Left lung (tissue), 14 donors: ENCODE measurements at regions of chr11 and their contacts with region 1.

Region 1: DNA sequence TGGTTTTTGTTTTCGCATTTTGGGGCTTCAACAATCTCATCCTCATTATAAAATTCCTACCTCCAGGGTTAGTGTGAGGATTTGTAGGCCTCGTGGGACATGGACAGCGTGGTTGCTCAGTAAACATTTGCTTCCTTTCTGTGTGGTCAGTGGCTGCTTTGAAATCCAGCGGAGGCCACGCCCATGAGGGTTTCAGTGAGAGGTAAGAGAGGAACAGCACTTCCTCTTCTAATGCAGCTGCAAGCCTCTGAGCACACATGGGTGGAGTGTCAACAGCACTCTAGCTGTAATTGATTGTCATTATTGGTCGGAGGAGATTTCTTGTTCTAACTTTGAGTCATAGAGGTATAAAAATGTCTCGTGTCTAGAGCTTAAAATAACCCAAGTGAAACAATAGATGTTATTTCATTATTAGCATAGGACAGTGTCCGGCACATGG is 6.0 kb upstream of the ARHGAP42 start:
- DNase-seq: peak in 2 of 4 donors; percentile 66 to 79
- ATAC-seq: peak; percentile 88
- H3K4me3 ChIP-seq: no peak overlapping the region
- H3K27ac ChIP-seq: no peak overlapping the region
- H3K4me1 ChIP-seq: peaks cover 0 to 3% of the 10 kb centered on the region in 2 donors
- H3K27me3 ChIP-seq: peaks cover 0 to 7% of the 10 kb centered on the region in 2 donors
- CTCF ChIP-seq: no peak

Region 2: DNA sequence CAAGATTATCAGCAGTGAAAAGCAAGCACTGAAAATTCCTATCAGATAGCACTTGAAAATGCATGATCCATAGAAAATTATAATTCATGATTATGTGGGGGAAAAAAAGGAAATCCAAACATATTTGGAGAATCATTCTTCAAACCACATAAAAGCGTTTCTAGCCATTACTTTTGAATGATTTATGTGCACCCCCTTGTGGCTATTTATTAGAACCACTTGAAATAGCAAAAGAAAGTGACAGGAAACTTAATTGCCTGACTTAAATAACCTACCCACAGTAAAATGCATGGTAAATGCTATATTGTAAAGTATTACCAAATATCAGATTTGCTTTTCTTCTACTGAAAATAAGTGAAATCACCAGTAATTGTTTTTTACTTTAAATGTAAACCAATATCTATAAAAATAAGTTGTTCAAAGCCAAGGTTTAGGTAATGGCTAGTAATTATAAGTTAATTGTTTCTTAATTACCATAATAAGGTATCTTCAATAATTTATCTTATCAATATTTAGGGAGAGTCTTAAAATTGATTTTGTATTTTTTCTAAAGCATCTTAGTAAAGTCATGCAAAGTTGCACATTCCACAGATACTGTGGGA is 174.5 kb after region 1 on chr11:
- intact Hi-C with region 1: loop called in 1 of 2 experiments (anchors 5 kb)
- DNase-seq: peak in 2 of 4 donors; percentile 41 to 53
- ATAC-seq: peak; percentile 50
- H3K4me3 ChIP-seq: no peak overlapping the region
- H3K27ac ChIP-seq: no peak overlapping the region
- H3K4me1 ChIP-seq: no peaks in the 10 kb centered on the region
- H3K27me3 ChIP-seq: no peaks in the 10 kb centered on the region
- CTCF ChIP-seq: peak; percentile 30 to 55

Region 3: DNA sequence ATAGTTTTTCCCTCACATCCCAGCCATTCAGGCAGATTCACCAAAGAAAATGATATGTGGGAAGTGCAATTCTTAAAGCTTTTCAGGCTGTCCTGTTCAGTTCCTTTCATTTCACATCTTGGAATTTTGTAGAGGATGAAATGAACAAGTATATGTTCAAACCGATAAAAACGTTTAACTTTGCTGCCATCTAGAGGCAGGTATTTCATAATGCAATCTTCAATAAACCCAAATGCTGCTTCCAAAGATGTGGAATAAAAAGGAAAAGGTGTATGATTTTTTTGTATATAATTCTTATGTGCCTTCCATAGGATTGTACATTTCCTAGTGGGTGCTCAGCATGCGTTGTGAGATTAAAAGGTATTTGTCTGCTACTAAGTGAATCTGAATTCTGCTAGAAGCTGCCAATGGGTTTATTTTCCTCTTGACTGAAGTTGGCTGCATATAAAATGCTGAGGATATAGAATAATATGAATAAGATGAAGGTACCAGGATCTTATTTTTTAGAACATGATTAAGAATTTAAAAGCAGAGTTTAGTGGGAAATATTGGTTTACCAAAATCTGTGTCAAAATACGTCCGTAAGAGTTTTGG is 249.2 kb after region 1 on chr11:
- intact Hi-C with region 1: loop called in 1 of 2 experiments (anchors 5 kb)
- DNase-seq: peak in 2 of 4 donors; percentile 49 to 73
- ATAC-seq: peak; percentile 79
- H3K4me3 ChIP-seq: no peak overlapping the region
- H3K27ac ChIP-seq: no peak overlapping the region
- H3K4me1 ChIP-seq: no peaks in the 10 kb centered on the region
- H3K27me3 ChIP-seq: no peaks in the 10 kb centered on the region
- CTCF ChIP-seq: peak; percentile 51 to 55